Vagina (tissue), 2 donors: ENCODE measurements at regions of chr22 and their contacts with region 1.

Region 1: DNA sequence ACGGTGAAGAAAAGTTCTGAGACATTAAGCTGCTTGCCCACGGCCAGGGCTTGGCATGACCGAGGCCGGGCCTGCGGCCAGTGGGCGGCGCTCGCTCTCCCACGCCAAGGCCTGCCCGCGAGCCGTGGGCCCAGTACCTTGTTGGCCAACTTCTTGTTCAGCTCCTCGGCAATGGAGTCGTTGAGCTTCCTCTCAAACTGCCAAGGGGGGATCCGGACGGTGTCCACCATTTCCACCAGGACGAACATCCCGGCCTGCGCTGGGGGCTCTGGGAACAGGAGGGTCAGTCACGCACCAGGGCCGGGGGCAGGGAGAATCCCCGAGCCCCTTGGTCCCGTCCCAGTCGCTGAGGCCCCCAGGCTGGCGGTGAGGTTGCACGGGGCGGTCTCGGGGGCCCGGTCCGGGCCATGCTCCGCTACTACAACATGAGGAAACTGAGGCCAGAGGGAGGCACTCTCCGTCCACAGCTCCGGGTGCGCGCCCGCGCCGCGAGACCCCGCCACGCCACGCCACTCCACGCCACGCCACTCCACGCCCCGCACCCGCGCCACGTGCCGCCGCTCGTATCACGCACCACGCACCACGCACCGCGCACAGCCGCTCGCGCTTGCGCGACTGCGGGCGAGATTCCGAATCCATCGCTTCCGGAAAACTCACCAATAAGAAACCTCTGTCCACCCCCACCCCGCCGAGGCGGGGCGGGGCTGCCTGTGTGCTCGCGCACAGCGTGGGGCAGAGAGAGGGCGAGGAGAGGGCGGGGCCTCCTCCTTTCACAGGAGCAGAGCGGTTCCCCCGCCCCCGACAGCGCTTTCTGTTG is at the start of gene POLR3H:
- DNase-seq: peak in 1 of 2 donors; percentile 96
- H3K4me3 ChIP-seq: peak within 1 kb of the TSS; percentile 67 to 69
- H3K27ac ChIP-seq: peak within 1 kb of the TSS; percentile 74
- H3K4me1 ChIP-seq: peaks cover 34% of the 10 kb centered on the region
- H3K27me3 ChIP-seq: no peaks in the 10 kb centered on the region
- CTCF ChIP-seq: peak; percentile 9 to 50 (median 31)
- POLR2A ChIP-seq: peak in 1 of 2 donors; percentile 32
- total RNA-seq, gene POLR3H: 21.4 TPM

Region 2: GRCh38 chr22:41444360-41445128 is 99.5 kb before region 1 on chr22:
- intact Hi-C with region 1: no loop called
- DNase-seq: peak in 1 of 2 donors; percentile 99
- H3K4me3 ChIP-seq: peak overlapping the region; percentile 91 to 95
- H3K27ac ChIP-seq: peak overlapping the region; percentile 99
- H3K4me1 ChIP-seq: peaks cover 36% of the 10 kb centered on the region
- H3K27me3 ChIP-seq: no peaks in the 10 kb centered on the region
- CTCF ChIP-seq: no peak
- POLR2A ChIP-seq: peak in 1 of 2 donors; percentile 29

Region 3: DNA sequence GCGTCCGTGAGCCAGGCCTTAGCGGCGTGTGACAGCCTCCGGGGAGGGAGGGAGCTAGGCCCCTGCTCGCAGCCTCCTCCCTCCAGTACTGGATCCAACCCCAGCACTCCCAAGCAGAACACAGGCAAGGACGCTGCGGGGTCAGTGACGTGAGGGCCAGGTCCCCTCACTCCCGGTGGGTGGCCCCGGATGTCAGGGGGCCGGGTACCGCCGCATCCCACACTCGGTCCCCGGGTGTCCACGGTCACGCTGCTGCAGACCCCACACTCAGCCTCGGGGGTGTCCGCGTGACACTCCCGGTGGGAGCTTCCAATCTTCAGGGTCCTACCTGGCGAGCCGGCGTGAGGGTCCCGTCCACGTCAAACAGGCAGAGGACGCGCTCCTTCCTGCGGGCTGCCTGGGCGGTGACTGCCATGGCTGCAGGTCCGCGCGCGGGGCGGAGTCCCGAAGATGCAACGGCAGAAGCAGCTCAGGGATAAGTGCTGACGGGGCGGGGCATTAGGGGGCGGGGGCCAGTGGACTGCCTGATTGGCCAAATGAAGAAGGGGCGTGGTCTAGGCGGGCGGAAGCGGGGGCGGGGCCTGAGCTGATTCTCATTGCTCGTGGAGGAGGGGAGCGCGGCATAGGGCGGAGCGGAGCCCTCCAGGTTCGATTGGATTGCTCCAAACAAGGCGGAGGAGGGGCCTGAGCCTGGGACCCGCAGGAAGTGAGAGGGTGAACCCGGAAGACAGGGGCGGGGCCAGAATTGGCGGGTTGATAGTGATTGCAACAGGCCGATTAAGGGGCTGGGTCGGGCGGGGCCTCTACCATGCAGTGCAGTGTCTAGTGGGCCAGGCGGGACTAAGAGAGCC is 45.6 kb after region 1 on chr22 and contains the start of gene PMM1:
- intact Hi-C with region 1: loop called (anchors 5 kb)
- DNase-seq: peak; percentile 99 to 100
- H3K4me3 ChIP-seq: peak within 1 kb of the TSS; percentile 92 to 93
- H3K27ac ChIP-seq: peak within 1 kb of the TSS; percentile 77
- H3K4me1 ChIP-seq: peaks cover 19% of the 10 kb centered on the region
- H3K27me3 ChIP-seq: no peaks in the 10 kb centered on the region
- CTCF ChIP-seq: no peak
- POLR2A ChIP-seq: peak in 1 of 2 donors; percentile 84
- total RNA-seq, gene PMM1: 40.8 TPM